ENCODE measurements at regions of chr10 and their contacts with region 1.

Region 1: DNA sequence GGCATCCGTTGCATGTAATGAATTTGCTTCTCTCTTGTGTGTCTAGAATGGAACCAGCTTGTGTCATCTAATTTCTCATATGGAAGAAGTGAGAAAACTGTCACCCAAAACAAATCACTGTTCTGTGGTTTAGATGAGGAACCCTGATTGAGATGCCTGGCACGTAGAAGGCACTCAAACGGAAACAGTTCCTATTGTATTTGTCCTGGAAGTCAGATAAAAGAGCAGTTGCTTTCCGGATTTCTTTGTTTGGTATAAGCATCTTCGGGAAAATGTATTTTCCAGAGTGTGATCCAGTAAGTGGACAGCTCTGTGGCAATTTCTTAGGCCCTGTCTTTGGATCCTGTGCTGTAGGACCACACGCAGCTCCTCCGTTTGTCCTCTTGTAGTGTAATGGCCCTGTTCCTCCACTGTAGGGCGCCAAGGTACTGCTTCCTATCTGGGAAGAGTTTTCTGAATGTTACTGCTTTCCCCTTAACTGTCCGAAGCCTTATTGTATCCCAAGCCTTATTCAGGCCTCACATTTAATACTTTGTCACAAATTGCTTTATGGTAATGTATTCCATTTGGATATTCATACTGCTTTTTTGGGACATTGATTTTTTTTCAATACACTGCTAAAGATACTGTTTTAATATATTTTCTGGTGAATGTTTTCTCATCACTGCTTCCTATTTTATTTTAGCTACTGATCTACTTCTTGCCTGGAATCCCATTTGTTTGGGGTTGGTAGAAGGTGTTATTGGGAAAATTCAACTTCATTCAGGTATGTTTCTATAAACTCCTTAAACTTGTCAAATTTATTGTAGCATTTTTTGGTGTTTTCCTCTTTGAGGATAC is 24.8 kb downstream of the INPP5F start:
- DNase-seq: peak; percentile 29 to 79
- ATAC-seq: peak; percentile 87 to 97 (median 94)
- H3K4me3 ChIP-seq: no peak overlapping the region
- H3K27ac ChIP-seq: peak overlapping the region in 1 of 10 donors; percentile 28
- H3K4me1 ChIP-seq: peaks cover 0 to 16% (median 7%) of the 10 kb centered on the region in 9 donors
- H3K27me3 ChIP-seq: no peaks in the 10 kb centered on the region
- CTCF ChIP-seq: peak; percentile 67 to 96 (median 93)

Region 2: DNA sequence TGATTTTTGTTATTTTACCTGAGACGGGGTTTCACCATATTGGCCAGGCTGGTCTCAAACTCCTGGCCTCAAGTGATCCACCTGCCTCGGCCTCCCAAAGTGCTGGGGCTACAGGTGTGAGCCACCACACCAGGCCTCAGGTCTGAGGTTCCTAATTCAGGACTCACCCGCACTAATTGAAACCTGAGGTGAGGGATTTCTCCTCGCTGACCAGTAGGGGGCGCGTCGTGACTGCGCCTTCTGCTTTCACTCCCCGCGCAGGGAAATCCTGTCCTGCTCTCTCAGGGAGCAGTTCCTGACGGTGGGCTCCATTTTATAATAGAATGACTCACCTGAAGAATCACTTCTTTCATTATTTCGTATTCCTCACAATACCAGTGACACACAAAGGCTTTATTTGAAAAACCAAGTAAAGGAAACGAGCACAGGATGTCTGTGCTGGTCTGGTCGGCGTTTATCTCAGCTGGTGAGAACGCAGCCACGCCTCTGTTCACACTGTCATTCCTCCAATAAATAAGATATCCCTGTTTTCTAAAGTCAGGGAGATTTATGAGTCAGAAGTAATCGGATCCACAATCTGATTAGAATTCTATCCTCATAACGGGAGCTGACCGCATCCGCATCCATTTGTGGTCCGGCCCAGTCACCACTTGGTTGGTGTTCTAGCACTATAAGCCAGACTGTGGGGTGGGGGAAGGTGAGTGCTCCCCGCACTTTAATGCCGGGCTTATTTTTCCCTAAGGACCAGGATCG is 64.0 kb before region 1 on chr10:
- intact Hi-C with region 1: loop called in 1 of 10 experiments (anchors 5 kb)
- DNase-seq: peak; percentile 78 to 85
- ATAC-seq: peak; percentile 83 to 93 (median 89)
- H3K4me3 ChIP-seq: peak overlapping the region in 7 of 10 donors; percentile 10 to 51 (median 42)
- H3K27ac ChIP-seq: peak overlapping the region in 8 of 10 donors; percentile 3 to 72 (median 49)
- H3K4me1 ChIP-seq: peaks cover 0 to 26% (median 9%) of the 10 kb centered on the region in 9 donors
- H3K27me3 ChIP-seq: no peaks in the 10 kb centered on the region
- CTCF ChIP-seq: peak; percentile 91 to 97 (median 95)

Region 3: DNA sequence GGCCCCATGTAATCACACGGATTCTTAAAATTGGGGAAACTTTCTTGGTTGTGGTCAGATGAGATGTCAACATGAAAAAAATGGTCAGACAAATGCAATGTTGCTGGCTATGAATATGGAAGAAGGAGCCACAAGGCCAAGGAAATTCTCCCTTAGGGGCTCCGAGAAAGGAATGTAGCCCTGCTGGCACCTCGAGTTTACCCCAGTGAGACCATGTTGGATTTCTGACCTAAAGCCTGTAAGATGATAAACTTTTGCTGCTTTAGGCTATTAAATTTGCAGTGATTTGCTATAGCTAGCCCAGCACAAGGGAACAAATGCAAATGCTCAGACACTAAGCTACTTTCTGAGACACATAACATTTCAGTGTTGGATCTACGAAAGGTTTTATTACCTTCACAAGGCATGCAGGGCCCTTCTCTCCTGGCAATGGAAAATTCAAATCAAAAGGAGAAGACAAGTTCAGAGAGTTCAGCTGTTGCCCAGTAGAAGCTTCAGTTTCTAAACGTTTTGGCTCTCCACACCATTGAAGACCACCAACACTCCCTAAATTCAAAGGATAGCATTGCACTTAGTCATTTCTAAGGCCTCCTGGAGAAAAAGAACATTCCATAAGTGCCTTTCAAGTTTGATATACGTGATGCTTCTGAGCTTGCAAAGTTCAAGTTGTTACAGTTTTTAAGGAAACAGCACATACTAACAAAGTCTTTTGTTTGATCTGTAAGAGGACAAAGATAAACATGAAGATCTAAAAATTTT is 98.6 kb after region 1 on chr10:
- intact Hi-C with region 1: loop called in 2 of 10 experiments (anchors 10 kb)
- DNase-seq: no peak
- ATAC-seq: no peak
- H3K4me3 ChIP-seq: no peak overlapping the region
- H3K27ac ChIP-seq: peak overlapping the region in 1 of 10 donors; percentile 12
- H3K4me1 ChIP-seq: peaks cover 0 to 16% (median 0%) of the 10 kb centered on the region in 9 donors
- H3K27me3 ChIP-seq: no peaks in the 10 kb centered on the region
- CTCF ChIP-seq: no peak

Region 4: DNA sequence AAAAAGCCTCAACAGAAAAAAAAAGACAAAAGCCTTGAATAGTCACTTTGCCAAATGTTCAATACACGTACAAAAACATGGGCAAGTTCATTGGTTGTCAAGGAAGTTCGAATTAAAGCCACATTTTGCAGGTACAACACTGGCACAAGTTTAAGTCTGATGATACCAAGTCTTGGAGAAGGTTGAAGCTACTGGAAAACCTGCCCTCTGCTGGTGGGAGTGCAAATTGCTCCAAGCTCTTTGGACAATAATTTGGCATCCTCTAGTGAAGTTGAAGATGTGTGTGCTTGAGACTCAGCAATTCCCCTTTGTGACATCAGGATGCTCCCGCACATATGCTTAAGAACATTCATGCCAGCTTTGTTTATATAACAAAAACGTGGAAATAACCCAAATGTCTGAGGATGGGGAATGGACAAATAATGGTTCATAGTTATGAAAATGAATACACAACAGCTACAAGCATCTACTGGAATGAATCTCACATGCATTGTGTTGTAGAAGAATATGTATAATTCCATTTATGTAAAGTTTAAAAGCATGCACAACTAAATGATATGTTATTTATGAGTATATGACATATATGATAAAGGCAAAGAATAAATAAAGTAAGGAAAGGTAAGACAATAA is 586.4 kb after region 1 on chr10:
- intact Hi-C with region 1: loop called in 1 of 10 experiments (anchors 10 kb)
- DNase-seq: peak; percentile 10 to 13
- ATAC-seq: no peak
- H3K4me3 ChIP-seq: no peak overlapping the region
- H3K27ac ChIP-seq: no peak overlapping the region
- H3K4me1 ChIP-seq: no peaks in the 10 kb centered on the region
- H3K27me3 ChIP-seq: peaks cover 0 to 3% (median 0%) of the 10 kb centered on the region in 7 donors
- CTCF ChIP-seq: peak; percentile 11 to 74 (median 60)